ENCODE measurements at regions of chr10 and their contacts with region 1.

Region 1: GRCh38 chr10:125936331-125936730 is 40.0 kb downstream of the FANK1 start:
- DNase-seq: no peak
- H3K4me3 ChIP-seq: no peak overlapping the region
- H3K27me3 ChIP-seq: no peaks in the 10 kb centered on the region
- CTCF ChIP-seq: no peak

Region 2: GRCh38 chr10:126749015-126749655 is 812.8 kb after region 1 on chr10:
- CTCF ChIA-PET with region 1: interaction called, 23 read pairs
- POLR2A ChIA-PET with region 1: no interaction called
- DNase-seq: peak; percentile 5
- H3K4me3 ChIP-seq: no peak overlapping the region
- H3K27me3 ChIP-seq: no peaks in the 10 kb centered on the region
- CTCF ChIP-seq: peak; percentile 86

Measured in BJ (cell line).